Cardiac septum (tissue), 1 donor: ENCODE measurements at regions of chr4 and their contacts with region 1.

Region 1: GRCh38 chr4:183073838-183074145 is 25.3 kb upstream of the WWC2 start:
- DNase-seq: no peak

Region 2: GRCh38 chr4:182711211-182711610 is 362.6 kb before region 1 on chr4:
- intact Hi-C with region 1: no loop called
- DNase-seq: no peak

Region 3: DNA sequence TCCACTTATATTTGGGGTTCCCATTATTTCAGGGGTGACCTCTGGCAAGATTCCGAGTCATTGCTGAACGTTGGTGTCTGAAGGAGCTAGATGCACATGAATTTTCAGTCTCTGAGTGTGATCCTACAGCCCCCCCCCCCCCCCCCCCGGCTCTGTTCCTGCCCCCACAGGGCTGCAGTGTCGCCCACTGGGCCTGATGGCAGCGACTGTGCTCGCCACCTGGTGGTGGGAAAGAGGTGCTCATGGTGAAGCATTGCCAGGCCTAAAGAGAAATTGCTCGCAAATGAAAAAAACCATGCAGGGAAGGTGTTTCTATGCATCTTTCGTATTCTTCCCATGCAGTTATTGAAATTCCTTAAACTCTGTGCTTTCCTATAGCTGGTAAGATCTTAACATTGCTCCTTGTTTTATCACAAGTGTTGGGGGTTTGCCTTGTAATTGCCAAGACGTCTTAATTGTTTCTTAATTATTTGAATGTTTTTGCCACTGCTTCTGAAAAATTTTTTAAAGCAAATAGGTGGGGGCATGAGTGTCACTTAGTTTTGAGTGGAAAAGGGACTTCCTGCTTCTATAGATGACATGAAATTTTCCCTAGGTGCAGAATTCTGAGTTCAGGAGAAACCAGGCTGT is 183.1 kb after region 1 on chr4:
- intact Hi-C with region 1: loop called (anchors 2 kb)
- DNase-seq: no peak

Region 4: GRCh38 chr4:183348706-183349659 is 275.2 kb after region 1 on chr4:
- intact Hi-C with region 1: no loop called
- DNase-seq: peak; percentile 35